OCI-LY7 (cell line): ENCODE measurements at regions of chr7 and their contacts with region 1.

Region 1: DNA sequence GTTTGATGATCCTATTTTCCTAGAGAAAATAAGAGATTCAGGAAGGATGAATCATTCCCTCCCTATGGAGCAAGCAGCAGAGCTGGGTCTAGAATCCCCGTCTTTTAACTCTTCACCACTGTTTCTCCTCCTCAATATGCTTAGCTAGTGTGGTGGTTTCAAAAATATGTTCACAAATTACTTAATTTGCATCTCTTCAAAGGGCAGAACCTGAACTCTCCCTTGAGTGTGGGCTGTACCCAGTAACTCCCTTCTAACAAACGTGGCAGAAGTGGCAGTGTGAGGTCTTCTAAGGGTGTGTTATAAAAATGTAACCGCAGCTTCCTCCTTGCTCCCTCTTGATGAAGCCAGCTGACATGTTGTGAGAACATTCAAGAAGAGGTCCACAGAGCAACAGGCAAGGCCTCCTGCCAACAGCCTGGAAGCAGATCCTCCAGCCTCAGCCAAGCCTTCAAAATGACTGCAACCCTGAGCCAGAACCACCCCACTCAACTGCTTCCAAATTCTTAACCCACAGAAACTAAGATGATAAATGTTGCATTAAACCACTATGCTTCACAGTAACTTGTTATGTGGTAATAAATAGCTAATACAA is 36.6 kb downstream of the SRPK2 start:
- DNase-seq: peak; percentile 72
- H3K4me3 ChIP-seq: no peak overlapping the region
- H3K27ac ChIP-seq: no peak overlapping the region
- H3K4me1 ChIP-seq: peaks cover 28% of the 10 kb centered on the region
- CTCF ChIP-seq: no peak

Region 2: DNA sequence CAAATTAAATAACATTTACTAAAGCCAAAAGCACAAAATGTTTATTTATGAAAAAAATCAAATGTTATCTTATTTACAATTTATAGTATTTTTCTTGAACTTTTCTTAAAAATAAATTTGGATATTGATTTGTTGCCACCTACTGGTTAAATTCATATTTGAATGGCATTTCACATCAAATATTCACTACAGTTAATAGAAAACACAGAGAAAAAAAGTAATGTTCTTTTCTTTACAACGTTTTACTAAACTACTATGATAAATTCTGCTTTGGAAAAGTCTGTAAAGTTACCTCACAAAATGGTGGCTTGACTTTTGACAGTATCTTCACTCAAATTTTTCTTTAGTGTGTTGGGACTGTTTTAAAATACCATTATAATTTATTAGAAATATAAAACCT is 16.1 kb before region 1 on chr7:
- CTCF ChIA-PET with region 1: no interaction called
- POLR2A ChIA-PET with region 1: interaction called, 10 read pairs
- intact Hi-C with region 1: no loop called
- DNase-seq: peak; percentile 10
- H3K4me3 ChIP-seq: no peak overlapping the region
- H3K27ac ChIP-seq: no peak overlapping the region
- H3K4me1 ChIP-seq: no peaks in the 10 kb centered on the region
- CTCF ChIP-seq: peak; percentile 76

Region 3: DNA sequence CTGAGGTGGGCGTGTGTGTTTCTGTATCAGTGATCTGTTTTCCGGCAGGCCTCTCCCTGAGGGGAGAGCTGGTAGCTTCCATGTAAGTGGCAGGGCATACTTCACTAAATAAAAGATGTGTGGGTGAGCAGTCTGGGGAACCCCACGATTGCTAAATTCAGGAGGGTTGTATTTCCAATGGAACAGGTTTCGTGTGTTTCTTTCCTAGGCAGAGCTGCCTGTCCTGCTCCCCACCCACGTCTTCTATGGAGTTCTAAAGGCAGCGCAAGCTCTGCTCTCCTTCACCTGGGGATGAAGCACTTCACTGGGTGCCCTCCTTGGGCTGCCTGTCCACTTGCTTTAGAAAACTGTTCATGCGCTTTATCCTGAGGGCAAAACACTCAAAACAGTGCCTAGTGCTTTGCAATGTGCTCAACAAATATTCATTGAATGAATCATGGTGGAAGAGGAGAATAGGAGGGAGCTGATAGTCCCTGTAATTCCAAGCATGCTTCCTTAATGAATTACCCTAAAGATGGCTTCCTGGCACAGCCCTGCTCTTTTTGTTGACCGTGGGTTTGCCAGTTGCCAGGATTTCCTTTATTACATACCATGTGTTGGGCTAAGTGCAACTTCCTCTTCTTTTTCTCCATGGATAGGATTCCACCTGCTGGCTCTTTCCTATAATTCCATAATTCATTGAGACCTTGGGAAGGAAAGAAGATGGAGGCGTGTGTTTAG is 87.2 kb after region 1 on chr7:
- CTCF ChIA-PET with region 1: no interaction called
- POLR2A ChIA-PET with region 1: no interaction called
- intact Hi-C with region 1: no loop called
- DNase-seq: no peak
- H3K4me3 ChIP-seq: no peak overlapping the region
- H3K27ac ChIP-seq: no peak overlapping the region
- H3K4me1 ChIP-seq: no peaks in the 10 kb centered on the region
- CTCF ChIP-seq: no peak